H1 (cell line): ENCODE measurements at regions of chr7 and their contacts with region 1.

Region 1: DNA sequence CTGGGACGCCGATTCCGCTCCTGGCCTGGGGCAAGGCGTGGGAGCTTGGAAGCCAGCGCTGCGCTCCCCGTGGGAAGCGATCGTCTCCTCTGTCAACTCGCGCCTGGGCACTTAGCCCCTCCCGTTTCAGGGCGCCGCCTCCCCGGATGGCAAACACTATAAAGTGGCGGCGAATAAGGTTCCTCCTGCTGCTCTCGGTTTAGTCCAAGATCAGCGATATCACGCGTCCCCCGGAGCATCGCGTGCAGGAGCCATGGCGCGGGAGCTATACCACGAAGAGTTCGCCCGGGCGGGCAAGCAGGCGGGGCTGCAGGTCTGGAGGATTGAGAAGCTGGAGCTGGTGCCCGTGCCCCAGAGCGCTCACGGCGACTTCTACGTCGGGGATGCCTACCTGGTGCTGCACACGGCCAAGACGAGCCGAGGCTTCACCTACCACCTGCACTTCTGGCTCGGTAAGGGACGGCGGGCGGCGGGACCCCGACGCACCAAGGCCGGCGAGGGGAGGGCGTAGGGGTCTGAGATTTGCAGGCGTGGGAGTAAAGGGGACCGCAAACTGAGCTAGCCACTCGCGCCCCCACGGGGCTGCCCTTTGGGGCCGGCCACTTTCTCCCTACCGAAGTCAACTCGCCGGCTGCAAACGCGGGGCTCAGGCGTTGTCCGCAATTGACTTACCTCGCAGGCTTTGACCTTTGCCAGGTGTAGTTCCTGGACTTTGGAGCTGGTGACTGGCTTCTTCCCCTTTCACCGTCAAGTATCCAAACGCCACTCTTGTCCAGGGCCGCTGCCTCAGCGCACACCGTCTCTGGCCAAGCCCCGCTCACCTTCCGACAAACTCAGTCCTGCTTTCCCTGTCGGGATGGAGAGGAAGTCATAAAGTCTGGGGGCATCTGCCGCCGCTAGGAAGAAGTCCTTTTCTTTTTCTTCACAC is at the start of gene SCIN:
- DNase-seq: peak in 1 of 2 experiments; percentile 75
- H3K4me3 ChIP-seq: peak within 1 kb of the TSS; percentile 39 to 62 (median 56)
- H3K27ac ChIP-seq: no peak within 1 kb of the TSS
- H3K4me1 ChIP-seq: peaks cover 0 to 2% (median 1%) of the 10 kb centered on the region in 4 experiments; a peak in 2 of 7 replicates
- H3K27me3 ChIP-seq: peaks cover 4 to 29% (median 23%) of the 10 kb centered on the region in 4 experiments
- CTCF ChIP-seq: no peak
- EP300 ChIP-seq: no peak
- POLR2A ChIP-seq: 0 out of 3 replicates have a peak, but pooled peaks of 1 of the 2 experiments have one; percentile 18
- RAD21 ChIP-seq: no peak
- total RNA-seq, gene SCIN: 1.9 and 2.3 TPM in 2 replicates

Region 2: GRCh38 chr7:12194426-12194825 is 376.4 kb before region 1 on chr7:
- CTCF ChIA-PET with region 1: no interaction called
- POLR2A ChIA-PET with region 1: no interaction called
- DNase-seq: no peak
- H3K4me3 ChIP-seq: no peak overlapping the region
- H3K27ac ChIP-seq: no peak overlapping the region
- H3K4me1 ChIP-seq: peaks cover 0 to 6% (median 2%) of the 10 kb centered on the region in 4 experiments; a peak in 2 of 7 replicates
- H3K27me3 ChIP-seq: no peaks in the 10 kb centered on the region
- CTCF ChIP-seq: no peak
- EP300 ChIP-seq: no peak
- POLR2A ChIP-seq: no peak
- RAD21 ChIP-seq: no peak

Region 3: DNA sequence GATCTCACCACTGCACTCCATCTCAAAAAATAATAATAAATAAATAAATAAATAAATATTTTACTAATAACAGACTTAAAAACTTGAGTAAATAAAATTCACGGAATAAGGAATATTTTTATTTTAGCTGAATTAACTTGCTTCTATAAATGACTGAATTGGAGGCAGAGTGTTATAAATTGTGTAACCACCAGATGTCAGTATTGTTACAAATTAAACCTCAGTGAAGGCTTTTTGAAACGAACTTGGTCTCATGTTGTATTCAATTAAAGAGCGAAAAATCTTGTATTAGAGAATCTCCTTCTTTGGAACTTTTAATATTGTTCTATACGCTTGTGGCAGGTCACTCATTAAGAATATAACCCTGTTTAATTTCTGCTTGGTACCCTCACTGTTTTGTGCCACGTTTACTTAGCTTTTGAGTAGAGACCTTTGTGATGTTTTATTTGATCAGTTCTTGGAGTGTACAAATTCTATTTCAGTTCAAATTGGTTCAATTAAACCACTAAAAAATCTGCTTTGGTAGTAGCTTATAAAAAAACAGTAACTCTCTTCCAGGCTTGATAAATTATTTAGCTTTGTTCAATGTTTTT is 45.9 kb before region 1 on chr7:
- CTCF ChIA-PET with region 1: interaction called, 14 read pairs
- POLR2A ChIA-PET with region 1: interaction called, 3 read pairs
- DNase-seq: no peak
- H3K4me3 ChIP-seq: no peak overlapping the region
- H3K27ac ChIP-seq: no peak overlapping the region
- H3K4me1 ChIP-seq: no peaks in the 10 kb centered on the region
- H3K27me3 ChIP-seq: no peaks in the 10 kb centered on the region
- CTCF ChIP-seq: peak in 2 of 3 experiments; percentile 31 to 44; a peak in 2 of 4 replicates
- EP300 ChIP-seq: no peak
- POLR2A ChIP-seq: no peak
- RAD21 ChIP-seq: peak; percentile 67 to 81

Region 4: DNA sequence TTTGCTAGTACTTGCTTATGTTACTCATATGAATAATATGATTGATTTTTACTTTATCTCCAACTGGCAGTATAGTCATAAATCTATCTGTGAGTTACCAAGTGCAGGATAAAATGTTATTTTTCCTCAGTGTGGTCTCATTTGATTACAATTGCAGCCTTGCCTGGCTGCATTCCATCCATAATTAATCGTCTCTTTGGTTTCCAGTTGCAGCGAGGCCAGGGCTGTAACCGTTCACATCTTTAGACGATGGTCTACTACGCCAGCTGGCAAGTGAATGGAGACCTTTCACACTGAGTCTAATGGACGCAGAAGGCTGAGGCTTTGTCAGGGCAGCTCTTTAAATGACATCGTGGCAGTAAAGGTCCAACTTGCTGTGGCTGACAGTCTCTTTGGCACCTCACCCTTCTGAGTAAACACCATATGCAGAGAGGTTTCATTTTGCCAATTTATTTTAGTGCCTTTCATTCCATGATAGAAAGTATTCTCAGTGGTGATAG is 200.6 kb after region 1 on chr7:
- CTCF ChIA-PET with region 1: no interaction called
- POLR2A ChIA-PET with region 1: no interaction called
- DNase-seq: no peak
- H3K4me3 ChIP-seq: no peak overlapping the region; a peak in 1 of 8 replicates
- H3K27ac ChIP-seq: no peak overlapping the region
- H3K4me1 ChIP-seq: peaks cover 0 to 25% (median 4%) of the 10 kb centered on the region in 4 experiments; a peak in 6 of 7 replicates
- H3K27me3 ChIP-seq: no peaks in the 10 kb centered on the region
- CTCF ChIP-seq: no peak
- EP300 ChIP-seq: no peak
- POLR2A ChIP-seq: no peak
- RAD21 ChIP-seq: no peak

Region 5: GRCh38 chr7:12821746-12822145 is 250.9 kb after region 1 on chr7:
- CTCF ChIA-PET with region 1: no interaction called
- POLR2A ChIA-PET with region 1: no interaction called
- DNase-seq: no peak
- H3K4me3 ChIP-seq: no peak overlapping the region
- H3K27ac ChIP-seq: no peak overlapping the region
- H3K4me1 ChIP-seq: peaks cover 0 to 15% (median 3%) of the 10 kb centered on the region in 4 experiments; a peak in 3 of 7 replicates
- H3K27me3 ChIP-seq: no peaks in the 10 kb centered on the region
- CTCF ChIP-seq: no peak
- EP300 ChIP-seq: no peak
- POLR2A ChIP-seq: no peak
- RAD21 ChIP-seq: no peak